ENCODE measurements at regions of chr6 and their contacts with region 1.

Region 1: DNA sequence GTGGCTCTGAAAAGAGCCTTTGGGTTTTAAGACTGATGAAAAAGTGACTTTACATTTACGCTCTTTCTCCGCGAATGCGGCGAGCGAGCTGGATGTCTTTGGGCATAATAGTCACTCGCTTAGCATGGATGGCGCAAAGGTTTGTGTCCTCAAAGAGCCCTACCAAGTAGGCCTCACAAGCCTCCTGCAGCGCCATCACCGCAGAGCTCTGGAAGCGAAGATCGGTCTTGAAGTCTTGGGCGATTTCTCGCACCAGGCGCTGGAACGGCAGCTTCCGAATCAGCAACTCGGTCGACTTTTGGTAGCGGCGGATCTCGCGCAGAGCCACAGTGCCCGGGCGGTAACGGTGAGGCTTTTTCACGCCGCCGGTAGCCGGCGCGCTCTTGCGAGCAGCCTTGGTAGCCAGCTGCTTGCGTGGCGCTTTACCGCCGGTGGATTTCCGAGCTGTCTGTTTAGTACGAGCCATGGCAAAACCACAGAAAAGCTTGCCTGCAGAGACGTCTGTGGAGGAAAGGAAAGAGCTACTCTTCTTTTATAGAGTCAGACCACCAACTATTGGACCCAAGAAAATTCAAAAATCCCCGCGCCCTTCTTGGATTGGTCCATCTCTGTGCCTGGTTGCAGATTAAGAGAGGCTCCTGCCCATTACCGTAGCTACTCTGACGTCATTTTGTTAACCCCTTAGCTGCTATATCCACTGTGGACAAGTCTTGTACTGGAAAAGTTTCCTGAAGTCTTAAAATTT is 55.5 kb upstream of the HFE start:
- DNase-seq: peak; percentile 84 to 86
- ATAC-seq: peak; percentile 92
- H3K4me3 ChIP-seq: peak overlapping the region; percentile 9 to 37
- H3K27ac ChIP-seq: no peak overlapping the region
- H3K4me1 ChIP-seq: no peaks in the 10 kb centered on the region
- H3K27me3 ChIP-seq: peaks cover 0 to 3% of the 10 kb centered on the region in 2 donors

Region 2: DNA sequence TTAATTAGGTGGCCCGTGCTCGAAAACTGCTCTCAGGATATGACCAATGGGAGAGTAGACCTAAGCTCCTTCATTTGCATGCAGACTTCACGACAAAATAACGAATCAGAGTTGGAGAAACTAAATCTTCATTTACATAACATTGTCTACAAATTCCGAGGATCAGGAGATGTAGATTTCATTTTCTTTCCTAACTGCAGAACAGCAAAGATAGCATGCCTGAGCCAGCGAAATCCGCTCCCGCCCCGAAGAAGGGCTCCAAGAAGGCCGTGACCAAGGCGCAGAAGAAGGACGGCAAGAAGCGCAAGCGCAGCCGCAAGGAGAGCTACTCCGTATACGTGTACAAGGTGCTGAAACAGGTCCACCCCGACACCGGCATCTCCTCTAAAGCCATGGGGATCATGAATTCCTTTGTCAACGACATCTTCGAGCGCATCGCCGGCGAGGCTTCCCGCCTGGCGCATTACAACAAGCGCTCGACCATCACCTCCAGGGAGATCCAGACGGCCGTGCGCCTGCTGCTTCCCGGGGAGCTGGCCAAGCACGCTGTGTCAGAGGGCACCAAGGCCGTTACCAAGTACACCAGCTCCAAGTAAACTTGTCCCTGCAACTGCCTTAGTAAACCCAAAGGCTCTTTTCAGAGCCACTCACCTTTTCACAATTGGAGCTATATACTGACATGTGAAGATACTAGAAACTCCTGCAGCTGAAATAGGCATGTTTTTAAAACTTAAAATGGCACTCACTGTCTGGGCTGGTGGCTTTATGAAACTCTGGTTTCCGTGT is 152.0 kb after region 1 on chr6:
- intact Hi-C with region 1: loop called in 1 of 2 experiments (anchors 10 kb)
- DNase-seq: peak; percentile 77 to 87
- ATAC-seq: peak; percentile 93
- H3K4me3 ChIP-seq: peak overlapping the region; percentile 73 to 82
- H3K27ac ChIP-seq: peak overlapping the region; percentile 63 to 79
- H3K4me1 ChIP-seq: no peaks in the 10 kb centered on the region
- H3K27me3 ChIP-seq: no peaks in the 10 kb centered on the region

Measured in aorta (tissue), 5 donors.